Endothelial cell of umbilical vein (primary cell): ENCODE measurements at regions of chr12 and their contacts with region 1.

Region 1: GRCh38 chr12:42201063-42201462 is 37.0 kb downstream of the YAF2 start:
- DNase-seq: no peak
- H3K4me3 ChIP-seq: no peak overlapping the region
- H3K27ac ChIP-seq: no peak overlapping the region
- H3K4me1 ChIP-seq: no peaks in the 10 kb centered on the region
- H3K27me3 ChIP-seq: no peaks in the 10 kb centered on the region
- CTCF ChIP-seq: no peak
- POLR2A ChIP-seq: no peak

Region 2: GRCh38 chr12:42261708-42262107 is 60.6 kb after region 1 on chr12:
- CTCF ChIA-PET with region 1: no interaction called
- POLR2A ChIA-PET with region 1: no interaction called
- dilution Hi-C with region 1: no loop called
- intact Hi-C with region 1: loop called (anchors 2 kb)
- DNase-seq: no peak
- H3K4me3 ChIP-seq: no peak overlapping the region
- H3K27ac ChIP-seq: no peak overlapping the region
- H3K4me1 ChIP-seq: no peaks in the 10 kb centered on the region
- H3K27me3 ChIP-seq: no peaks in the 10 kb centered on the region
- CTCF ChIP-seq: no peak
- POLR2A ChIP-seq: no peak